B cell (primary cell): ENCODE measurements at regions of chr16 and their contacts with region 1.

Region 1: GRCh38 chr16:85986931-85987749 is 88.2 kb downstream of the IRF8 start:
- DNase-seq: peak; percentile 51
- ATAC-seq: no peak
- H3K4me3 ChIP-seq: no peak overlapping the region
- H3K4me3 Mint-ChIP-seq: peak overlapping the region; percentile 83
- H3K27ac ChIP-seq: no peak overlapping the region
- H3K27ac Mint-ChIP-seq: peak overlapping the region; percentile 81
- H3K4me1 ChIP-seq: peaks cover 96 to 100% of the 10 kb centered on the region in 2 donors
- H3K4me1 Mint-ChIP-seq: peaks cover 98% of the 10 kb centered on the region
- H3K27me3 ChIP-seq: no peaks in the 10 kb centered on the region
- H3K27me3 Mint-ChIP-seq: no peaks in the 10 kb centered on the region
- CTCF ChIP-seq: no peak

Region 2: DNA sequence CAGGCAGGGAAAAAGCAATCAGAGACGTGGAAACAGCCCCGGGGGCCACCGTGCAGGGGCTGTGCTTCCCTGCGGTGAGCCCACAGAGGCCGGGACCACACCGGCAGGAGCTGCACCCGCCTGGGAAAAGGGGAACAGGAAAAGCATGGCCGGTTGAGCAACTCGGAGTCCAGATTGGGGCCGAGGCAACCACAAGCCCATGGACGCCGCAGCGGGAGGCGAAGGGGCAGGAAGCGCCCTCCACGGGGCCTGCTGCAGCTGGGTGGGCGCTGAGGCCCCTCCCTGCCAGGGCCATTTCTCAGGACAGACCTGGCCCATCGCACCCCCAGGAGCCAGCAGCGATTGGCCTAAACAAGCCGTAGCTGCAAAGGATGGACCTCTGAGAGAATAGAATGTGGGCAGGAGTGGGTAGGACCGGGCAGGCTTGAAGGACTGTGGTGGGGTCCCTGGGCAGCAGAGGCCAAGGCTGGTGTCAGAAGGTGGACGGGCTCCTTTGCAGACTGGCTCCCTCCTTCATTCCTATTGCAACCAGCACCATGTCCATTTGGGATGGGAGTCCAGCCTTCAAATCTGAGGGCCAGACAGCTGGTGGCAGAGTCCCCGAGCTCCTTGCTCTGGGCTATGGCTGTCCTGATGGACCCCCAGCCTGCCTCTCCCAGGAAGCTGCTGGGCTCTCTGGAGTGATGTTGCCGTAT is 157.2 kb before region 1 on chr16:
- CTCF ChIA-PET with region 1: interaction called, 21 read pairs
- POLR2A ChIA-PET with region 1: interaction called, 4 read pairs
- intact Hi-C with region 1: no loop called
- DNase-seq: peak; percentile 42
- ATAC-seq: no peak
- H3K4me3 ChIP-seq: peak overlapping the region in 4 of 5 experiments; percentile 11 to 28 (median 16)
- H3K4me3 Mint-ChIP-seq: peak overlapping the region; percentile 70
- H3K27ac ChIP-seq: peak overlapping the region; percentile 55 to 58
- H3K27ac Mint-ChIP-seq: peak overlapping the region; percentile 84
- H3K4me1 ChIP-seq: peaks cover 50 to 51% of the 10 kb centered on the region in 2 donors
- H3K4me1 Mint-ChIP-seq: peaks cover 64% of the 10 kb centered on the region
- H3K27me3 ChIP-seq: peaks cover 0 to 6% (median 0%) of the 10 kb centered on the region in 4 experiments
- H3K27me3 Mint-ChIP-seq: no peaks in the 10 kb centered on the region
- CTCF ChIP-seq: no peak

Region 3: DNA sequence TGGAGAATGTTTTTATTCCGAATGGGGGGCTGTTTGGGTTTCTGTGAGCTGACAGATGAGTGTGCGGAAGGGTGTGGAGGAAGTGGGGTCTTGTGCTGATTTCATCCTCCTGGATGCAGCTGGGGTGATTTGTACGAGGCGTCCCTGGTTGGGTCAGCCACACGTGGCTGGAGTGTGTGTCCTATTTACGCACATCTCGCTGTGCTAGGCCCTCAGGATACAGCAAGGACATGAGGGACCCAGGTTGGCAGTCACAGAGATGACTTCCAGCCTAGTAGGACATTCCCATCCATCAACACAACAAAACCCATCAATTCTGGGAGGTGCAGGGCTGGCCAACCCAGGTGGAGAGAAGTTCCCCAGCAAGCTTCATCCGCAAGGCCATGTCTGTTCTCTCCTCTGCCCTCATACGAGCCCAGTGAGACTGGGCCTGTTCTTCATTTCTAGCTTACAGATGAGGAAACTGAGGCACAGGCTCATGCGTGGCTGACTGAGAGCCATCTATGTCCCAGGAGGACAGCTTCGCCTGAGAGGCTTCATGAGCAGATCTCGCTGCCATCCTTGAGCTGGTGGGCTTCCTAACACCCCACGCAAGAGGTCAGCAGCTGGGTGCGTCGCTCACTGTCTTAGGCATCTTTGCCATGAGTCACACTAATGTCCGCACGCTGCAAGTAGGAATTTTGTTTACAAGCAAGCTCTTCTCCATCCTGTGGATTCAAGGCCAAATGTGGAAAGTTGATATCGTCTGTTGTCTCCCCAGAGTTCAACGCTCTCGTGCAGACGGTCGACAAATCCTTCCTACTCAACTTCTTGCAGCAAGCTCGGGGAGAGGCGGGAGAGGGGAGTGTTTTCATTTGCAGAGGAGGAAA is 63.8 kb before region 1 on chr16:
- CTCF ChIA-PET with region 1: interaction called, 10 read pairs
- POLR2A ChIA-PET with region 1: interaction called, 3 read pairs
- intact Hi-C with region 1: loop called (anchors 5 kb)
- DNase-seq: no peak
- ATAC-seq: no peak
- H3K4me3 ChIP-seq: no peak overlapping the region
- H3K4me3 Mint-ChIP-seq: no peak overlapping the region
- H3K27ac ChIP-seq: no peak overlapping the region
- H3K27ac Mint-ChIP-seq: peak overlapping the region; percentile 69
- H3K4me1 ChIP-seq: peaks cover 30 to 39% of the 10 kb centered on the region in 2 donors
- H3K4me1 Mint-ChIP-seq: peaks cover 49% of the 10 kb centered on the region
- H3K27me3 ChIP-seq: no peaks in the 10 kb centered on the region
- H3K27me3 Mint-ChIP-seq: no peaks in the 10 kb centered on the region
- CTCF ChIP-seq: no peak

Region 4: GRCh38 chr16:85935974-85936760 is 51.0 kb before region 1 on chr16:
- CTCF ChIA-PET with region 1: interaction called, 25 read pairs
- POLR2A ChIA-PET with region 1: no interaction called
- intact Hi-C with region 1: no loop called
- DNase-seq: peak; percentile 92
- ATAC-seq: peak; percentile 80
- H3K4me3 ChIP-seq: peak overlapping the region in 4 of 5 experiments; percentile 47 to 63 (median 55)
- H3K4me3 Mint-ChIP-seq: peak overlapping the region; percentile 81
- H3K27ac ChIP-seq: peak overlapping the region; percentile 96 to 98
- H3K27ac Mint-ChIP-seq: peak overlapping the region; percentile 94
- H3K4me1 ChIP-seq: peaks cover 76 to 85% of the 10 kb centered on the region in 2 donors
- H3K4me1 Mint-ChIP-seq: peaks cover 84% of the 10 kb centered on the region
- H3K27me3 ChIP-seq: no peaks in the 10 kb centered on the region
- H3K27me3 Mint-ChIP-seq: no peaks in the 10 kb centered on the region
- CTCF ChIP-seq: no peak

Region 5: GRCh38 chr16:86002178-86002900 is 15.2 kb after region 1 on chr16:
- CTCF ChIA-PET with region 1: interaction called, 44 read pairs
- POLR2A ChIA-PET with region 1: interaction called, 6 read pairs
- intact Hi-C with region 1: loop called (anchors 2 kb)
- DNase-seq: peak; percentile 55
- ATAC-seq: peak; percentile 80
- H3K4me3 ChIP-seq: peak overlapping the region in 1 of 5 experiments; percentile 14
- H3K4me3 Mint-ChIP-seq: peak overlapping the region; percentile 73
- H3K27ac ChIP-seq: peak overlapping the region; percentile 28 to 61
- H3K27ac Mint-ChIP-seq: peak overlapping the region; percentile 96
- H3K4me1 ChIP-seq: peaks cover 51 to 58% of the 10 kb centered on the region in 2 donors
- H3K4me1 Mint-ChIP-seq: peaks cover 57% of the 10 kb centered on the region
- H3K27me3 ChIP-seq: no peaks in the 10 kb centered on the region
- H3K27me3 Mint-ChIP-seq: no peaks in the 10 kb centered on the region
- CTCF ChIP-seq: no peak